ENCODE measurements at regions of chr3 and their contacts with region 1.

Region 1: GRCh38 chr3:71725279-71725991 is at the start of gene EIF4E3:
- H3K4me3 Mint-ChIP-seq: peak within 1 kb of the TSS; percentile 80
- H3K27ac Mint-ChIP-seq: peak within 1 kb of the TSS; percentile 68
- H3K4me1 Mint-ChIP-seq: peaks cover 60% of the 10 kb centered on the region
- H3K27me3 Mint-ChIP-seq: peaks cover 4% of the 10 kb centered on the region

Region 2: DNA sequence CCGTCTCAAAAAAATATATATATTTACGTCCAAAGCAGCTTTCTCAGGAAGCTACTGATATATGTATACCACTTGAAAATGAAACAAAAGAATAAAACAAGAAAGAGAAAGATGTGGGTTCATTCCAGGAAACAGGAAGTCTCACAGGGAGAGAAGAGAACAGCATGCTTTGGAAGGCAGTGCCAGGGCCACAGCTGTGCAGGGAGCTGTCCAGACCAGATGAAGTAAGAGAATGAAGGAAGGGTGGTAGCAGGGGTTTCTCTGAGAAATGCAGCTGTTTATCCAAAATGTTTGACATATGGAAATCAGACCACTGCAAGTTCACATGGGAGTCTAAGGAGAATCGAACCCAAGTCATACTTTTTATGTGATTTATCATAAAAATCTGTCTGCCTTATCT is 19.3 kb after region 1 on chr3:
- intact Hi-C with region 1: no loop called
- H3K4me3 Mint-ChIP-seq: no peak overlapping the region
- H3K27ac Mint-ChIP-seq: no peak overlapping the region
- H3K4me1 Mint-ChIP-seq: peaks cover 6% of the 10 kb centered on the region
- H3K27me3 Mint-ChIP-seq: no peaks in the 10 kb centered on the region

Region 3: DNA sequence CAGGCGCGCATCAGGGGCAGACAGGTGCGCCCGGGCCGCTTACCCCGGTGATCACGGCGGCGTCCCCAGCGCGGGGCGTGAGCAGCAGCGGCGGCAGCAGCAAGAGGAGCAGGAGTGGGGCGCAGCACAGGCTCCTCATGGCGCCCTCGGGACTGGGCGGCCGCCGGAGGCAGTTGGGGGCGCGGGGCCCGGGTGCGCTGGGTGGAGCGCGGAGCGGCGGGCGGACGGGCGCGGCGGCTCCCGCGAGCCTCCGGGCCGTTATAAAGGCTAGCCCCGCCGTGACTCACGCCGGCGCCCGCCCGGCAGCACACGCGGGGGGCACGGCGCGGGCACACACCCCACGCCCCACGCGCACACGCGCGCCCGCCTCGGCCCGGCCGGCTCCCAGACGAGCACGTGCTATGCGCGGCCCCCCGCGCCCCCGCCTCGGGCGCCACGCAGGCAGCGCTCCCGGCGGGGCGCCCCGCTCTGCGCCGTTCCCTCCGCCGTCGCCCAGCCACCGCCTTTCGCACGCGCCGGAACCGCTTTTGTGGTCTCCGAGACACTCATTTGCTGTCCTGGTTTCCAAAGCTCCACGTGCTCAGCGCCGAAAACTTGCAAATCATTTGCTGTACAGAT is 59.6 kb after region 1 on chr3 and contains the start of gene PROK2:
- intact Hi-C with region 1: loop called (anchors 10 kb)
- H3K4me3 Mint-ChIP-seq: peak within 1 kb of the TSS; percentile 87
- H3K27ac Mint-ChIP-seq: peak within 1 kb of the TSS; percentile 63
- H3K4me1 Mint-ChIP-seq: peaks cover 24% of the 10 kb centered on the region
- H3K27me3 Mint-ChIP-seq: peaks cover 29% of the 10 kb centered on the region

Measured in dendritic cell treated with granulocyte-macrophage colony-stimulating factor and Interleukin-4, amounts not matched to agents 40 ng/mL and 50 ng/mL, for 4 days (primary cell).